ENCODE measurements at regions of chr2 and their contacts with region 1.

Region 1: DNA sequence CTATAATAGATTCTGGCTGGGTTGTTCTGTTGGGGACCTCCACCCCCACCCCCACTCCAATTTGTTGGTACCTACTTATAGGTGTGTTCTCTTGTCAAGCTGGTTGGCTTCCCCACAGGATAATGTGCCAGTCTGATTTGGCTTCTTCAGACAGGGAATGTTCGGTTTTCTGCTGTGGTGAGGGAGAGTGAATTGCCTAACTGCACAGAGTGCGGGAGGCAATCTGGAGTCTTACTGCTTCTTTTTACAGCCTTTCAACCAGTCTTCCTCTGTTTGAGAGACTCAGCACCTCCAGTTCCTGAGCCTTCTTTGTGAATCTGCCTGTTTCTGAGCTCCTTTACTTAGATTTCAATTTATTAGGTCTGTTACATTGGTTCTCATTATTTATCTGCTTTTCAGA is 27.4 kb upstream of the SNORC start:
- DNase-seq: no peak
- ATAC-seq: no peak
- H3K4me3 ChIP-seq: no peak overlapping the region
- H3K4me3 Mint-ChIP-seq: no peak overlapping the region
- H3K27ac ChIP-seq: no peak overlapping the region
- H3K27ac Mint-ChIP-seq: no peak overlapping the region
- H3K4me1 ChIP-seq: peaks cover 21 to 22% of the 10 kb centered on the region in 2 donors
- H3K4me1 Mint-ChIP-seq: peaks cover 27% of the 10 kb centered on the region
- H3K27me3 ChIP-seq: no peaks in the 10 kb centered on the region
- H3K27me3 Mint-ChIP-seq: no peaks in the 10 kb centered on the region
- CTCF ChIP-seq: no peak

Region 2: DNA sequence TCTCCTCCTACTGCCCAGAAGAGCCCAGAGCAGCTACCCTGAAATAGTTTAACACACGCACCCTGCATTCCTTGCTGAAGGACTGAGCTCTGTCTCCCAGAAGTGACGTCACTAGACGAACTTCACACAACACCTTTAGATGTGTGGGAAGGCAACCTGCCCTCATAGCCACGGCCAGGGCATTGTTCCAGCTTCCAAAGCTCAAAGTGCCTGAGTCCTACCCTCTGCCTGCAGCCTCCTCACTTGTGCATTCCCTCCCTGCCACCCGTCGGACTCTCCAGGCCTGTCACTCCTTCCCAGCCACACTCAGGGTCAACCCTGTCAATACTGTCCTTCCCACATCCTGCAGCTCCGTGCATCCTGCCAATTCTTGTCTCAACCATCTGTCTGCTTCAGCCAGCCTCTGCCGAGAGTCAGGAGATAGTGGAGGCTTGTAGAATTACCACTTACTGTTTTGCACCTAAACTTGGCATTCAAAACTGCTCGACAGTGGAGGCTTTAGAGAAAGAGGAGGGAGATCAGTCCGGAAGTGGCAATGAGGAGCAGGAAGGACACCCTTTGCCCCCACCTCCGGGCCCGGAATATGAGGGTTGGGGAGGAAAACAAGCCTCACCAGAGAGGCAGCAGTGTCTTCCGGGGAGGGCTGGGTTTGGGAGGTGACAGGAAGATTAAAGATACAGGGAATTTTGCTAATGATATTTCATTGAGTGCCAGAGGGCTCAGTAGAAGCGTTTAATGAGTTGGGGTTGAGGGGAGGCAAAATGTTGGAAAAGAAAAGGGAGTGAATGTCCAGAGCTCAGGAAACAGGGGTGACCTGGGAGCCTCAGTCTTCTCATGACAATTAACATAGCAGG is 336.5 kb after region 1 on chr2:
- CTCF ChIA-PET with region 1: no interaction called
- POLR2A ChIA-PET with region 1: interaction called, 11 read pairs
- intact Hi-C with region 1: no loop called
- DNase-seq: no peak
- ATAC-seq: no peak
- H3K4me3 ChIP-seq: no peak overlapping the region
- H3K4me3 Mint-ChIP-seq: no peak overlapping the region
- H3K27ac ChIP-seq: peak overlapping the region in 1 of 2 donors; percentile 19
- H3K27ac Mint-ChIP-seq: no peak overlapping the region
- H3K4me1 ChIP-seq: no peaks in the 10 kb centered on the region
- H3K4me1 Mint-ChIP-seq: peaks cover 10% of the 10 kb centered on the region
- H3K27me3 ChIP-seq: no peaks in the 10 kb centered on the region
- H3K27me3 Mint-ChIP-seq: no peaks in the 10 kb centered on the region
- CTCF ChIP-seq: no peak

Measured in B cell (primary cell).